Psoas muscle (tissue), 8 donors: ENCODE measurements at regions of chr6 and their contacts with region 1.

Region 1: DNA sequence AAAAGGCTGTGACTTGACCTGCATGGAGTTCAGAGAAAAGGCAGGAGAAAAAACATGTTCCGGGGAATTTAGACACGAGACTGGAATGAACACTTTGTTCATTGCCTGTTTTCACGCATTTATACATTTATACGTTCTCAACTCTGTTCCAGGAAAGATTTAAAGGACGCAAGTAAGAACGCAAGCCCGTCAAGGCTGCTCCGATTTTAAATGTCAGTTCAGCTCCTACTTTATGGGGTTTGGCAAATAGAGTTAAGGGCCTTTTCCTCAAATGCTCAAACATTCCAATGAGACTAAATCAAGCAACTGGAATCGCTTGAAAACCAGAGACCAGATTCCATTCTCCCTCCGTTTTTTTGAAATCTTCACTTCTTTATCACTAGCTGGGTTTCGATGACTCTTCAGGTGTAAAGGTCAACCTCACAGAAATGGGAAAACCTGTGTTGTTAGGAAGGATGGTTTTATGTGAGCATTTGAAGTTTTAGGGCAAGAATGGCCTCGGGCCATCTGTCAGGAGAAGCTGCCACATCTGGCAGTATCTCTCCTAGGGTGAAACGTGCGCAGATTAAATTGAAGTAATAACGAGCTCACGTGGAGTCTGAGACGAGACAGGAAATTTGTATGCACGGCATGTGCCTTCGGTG is 24.9 kb downstream of the TTLL2 start:
- DNase-seq: no peak
- ATAC-seq: no peak
- H3K4me3 ChIP-seq: no peak overlapping the region
- H3K27ac ChIP-seq: no peak overlapping the region
- H3K4me1 ChIP-seq: no peaks in the 10 kb centered on the region
- H3K27me3 ChIP-seq: peaks cover 5 to 53% (median 6%) of the 10 kb centered on the region in 3 donors
- CTCF ChIP-seq: no peak

Region 2: DNA sequence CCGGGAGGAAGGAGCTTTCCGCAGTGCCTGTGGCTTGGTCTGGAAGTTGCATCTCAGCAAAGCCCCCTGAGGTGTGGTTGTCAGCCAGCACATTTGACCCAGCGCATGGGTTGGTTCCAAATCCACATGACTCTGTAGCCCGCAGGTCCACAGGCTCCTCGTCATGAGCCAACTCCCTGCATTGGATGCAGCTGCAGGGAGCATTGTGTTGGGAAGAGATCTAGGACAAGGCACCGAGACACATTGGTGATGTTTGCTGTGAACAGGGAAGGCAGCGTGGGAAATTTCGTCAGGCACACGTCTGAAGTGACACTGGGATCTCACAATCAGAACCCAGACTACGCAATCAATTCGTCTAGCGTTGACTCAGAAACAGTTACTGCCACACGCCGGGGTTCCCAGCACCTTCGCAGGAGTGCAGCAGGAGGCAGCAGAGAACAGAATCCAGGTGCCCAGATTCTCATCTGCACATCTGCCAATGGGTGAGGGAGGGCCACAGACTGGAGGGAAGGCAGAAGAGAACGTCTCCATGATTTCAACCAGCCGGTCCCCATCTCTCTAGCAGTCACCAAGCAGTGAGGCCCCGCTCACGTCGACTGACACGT is 152.1 kb after region 1 on chr6:
- intact Hi-C with region 1: loop called in 1 of 2 experiments (anchors 5 kb)
- DNase-seq: peak in 1 of 2 donors; percentile 24
- ATAC-seq: peak in 1 of 4 donors; percentile 27
- H3K4me3 ChIP-seq: no peak overlapping the region
- H3K27ac ChIP-seq: no peak overlapping the region
- H3K4me1 ChIP-seq: no peaks in the 10 kb centered on the region
- H3K27me3 ChIP-seq: peaks cover 0 to 2% (median 0%) of the 10 kb centered on the region in 3 donors
- CTCF ChIP-seq: no peak